ENCODE measurements at regions of chr3 and their contacts with region 1.

Region 1: GRCh38 chr3:143951351-143951971 is 20.2 kb upstream of the DIPK2A start:
- DNase-seq: no peak
- H3K4me3 ChIP-seq: no peak overlapping the region
- H3K27ac ChIP-seq: no peak overlapping the region
- H3K4me1 ChIP-seq: no peaks in the 10 kb centered on the region
- H3K27me3 ChIP-seq: no peaks in the 10 kb centered on the region
- CTCF ChIP-seq: peak; percentile 46 to 81 (median 72)
- POLR2A ChIP-seq: no peak

Region 2: DNA sequence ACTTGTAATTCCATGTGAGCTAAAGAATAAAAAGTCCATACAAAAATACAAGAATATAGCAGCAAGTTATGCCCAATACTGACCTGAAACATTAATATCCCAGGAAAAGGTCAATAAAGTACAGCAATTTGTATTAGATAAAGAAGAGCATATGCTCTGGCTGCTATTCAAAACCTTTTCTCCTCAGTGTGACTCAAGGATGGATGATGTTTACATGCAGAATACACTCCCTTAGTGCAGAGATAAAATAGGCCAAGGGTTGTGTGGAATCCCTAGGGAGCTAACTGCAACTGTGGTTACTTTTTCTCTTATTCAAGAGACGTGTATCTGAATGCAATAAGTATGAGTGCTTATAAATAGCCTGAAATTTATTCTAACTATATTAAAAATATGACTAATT is 181.8 kb before region 1 on chr3:
- intact Hi-C with region 1: loop called (anchors 5 kb)
- DNase-seq: no peak
- H3K4me3 ChIP-seq: no peak overlapping the region
- H3K27ac ChIP-seq: no peak overlapping the region
- H3K4me1 ChIP-seq: peaks cover 0 to 8% (median 0%) of the 10 kb centered on the region in 6 donors
- H3K27me3 ChIP-seq: no peaks in the 10 kb centered on the region
- CTCF ChIP-seq: no peak
- POLR2A ChIP-seq: no peak

Region 3: GRCh38 chr3:143786219-143787191 is 165.0 kb before region 1 on chr3:
- intact Hi-C with region 1: no loop called
- DNase-seq: no peak
- H3K4me3 ChIP-seq: no peak overlapping the region
- H3K27ac ChIP-seq: peak overlapping the region in 1 of 8 donors; percentile 10
- H3K4me1 ChIP-seq: peaks cover 0 to 13% (median 3%) of the 10 kb centered on the region in 6 donors
- H3K27me3 ChIP-seq: no peaks in the 10 kb centered on the region
- CTCF ChIP-seq: no peak
- POLR2A ChIP-seq: no peak

Region 4: DNA sequence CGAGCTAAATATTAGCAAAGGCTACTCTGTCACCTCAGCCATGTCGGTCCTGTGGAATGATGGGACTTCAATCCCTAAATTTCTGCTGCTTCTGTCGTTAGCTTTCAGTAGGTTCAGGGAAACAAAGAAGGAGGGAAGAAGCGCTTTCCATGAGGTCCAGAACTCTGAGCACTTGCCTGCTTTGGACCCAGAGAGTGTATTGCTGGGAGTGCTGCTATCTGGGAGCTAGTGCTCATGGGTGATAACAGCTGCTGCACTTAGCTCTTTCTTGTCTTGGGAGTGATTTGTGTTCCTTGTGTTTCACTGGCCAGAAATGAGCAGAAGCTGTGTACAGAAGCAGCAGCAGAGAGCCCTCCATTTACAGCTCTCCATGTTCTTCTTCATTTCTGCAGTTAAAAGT is 390.0 kb after region 1 on chr3:
- intact Hi-C with region 1: no loop called
- DNase-seq: no peak
- H3K4me3 ChIP-seq: no peak overlapping the region
- H3K27ac ChIP-seq: no peak overlapping the region
- H3K4me1 ChIP-seq: no peaks in the 10 kb centered on the region
- H3K27me3 ChIP-seq: no peaks in the 10 kb centered on the region
- CTCF ChIP-seq: no peak
- POLR2A ChIP-seq: no peak

Measured in spleen (tissue), 13 donors.